PC-9 (cell line): ENCODE measurements at regions of chr7 and their contacts with region 1.

Region 1: GRCh38 chr7:27921081-27921836 is 181.3 kb downstream of the TAX1BP1 start:
- DNase-seq: peak; percentile 66 to 82
- H3K4me3 ChIP-seq: no peak overlapping the region
- H3K27ac ChIP-seq: 0 out of 2 replicates have a peak overlapping the region, but pooled peaks have one; percentile 1
- H3K4me1 ChIP-seq: peaks cover 33% of the 10 kb centered on the region
- H3K27me3 ChIP-seq: no peaks in the 10 kb centered on the region
- CTCF ChIP-seq: peak; percentile 91

Region 2: GRCh38 chr7:27196287-27196767 is 724.9 kb before region 1 on chr7:
- CTCF ChIA-PET with region 1: interaction called, 21 read pairs
- POLR2A ChIA-PET with region 1: no interaction called
- intact Hi-C with region 1: loop called (anchors 1 kb)
- DNase-seq: peak; percentile 59 to 76
- H3K4me3 ChIP-seq: no peak overlapping the region
- H3K27ac ChIP-seq: no peak overlapping the region
- H3K4me1 ChIP-seq: no peaks in the 10 kb centered on the region
- H3K27me3 ChIP-seq: peaks cover 13% of the 10 kb centered on the region; the same call in 1 of the 2 replicates
- CTCF ChIP-seq: peak; percentile 99

Region 3: DNA sequence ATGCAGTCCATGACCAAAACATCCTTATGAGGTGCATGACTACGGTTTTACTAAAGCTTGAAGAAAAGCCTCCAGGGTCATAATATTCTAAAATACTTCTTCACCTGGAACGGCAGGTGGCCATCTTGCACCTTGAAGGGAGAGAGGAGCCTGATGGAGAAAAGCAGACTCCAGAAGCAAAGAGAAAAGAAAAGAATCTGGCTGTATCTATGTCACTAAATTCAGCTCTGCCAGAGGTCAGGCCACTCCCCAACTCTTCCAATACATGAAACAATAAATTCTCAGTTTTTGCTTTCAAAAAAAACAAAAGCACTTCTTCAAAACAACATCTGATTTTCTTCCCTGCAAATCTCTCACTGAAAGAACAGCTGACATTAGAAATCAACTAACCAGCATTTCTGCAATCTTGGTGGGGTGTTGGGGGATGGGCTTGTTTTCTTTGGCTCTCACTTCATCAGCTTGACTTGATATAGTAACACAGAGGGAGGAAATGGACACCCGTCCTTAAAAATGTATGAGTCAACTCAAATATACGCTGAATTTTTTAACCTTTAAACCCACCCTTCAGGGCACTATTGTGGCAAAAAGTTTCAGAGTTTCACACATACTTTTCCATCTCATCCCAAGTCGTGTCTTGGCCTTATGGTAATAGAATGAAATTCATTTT is 280.2 kb before region 1 on chr7:
- CTCF ChIA-PET with region 1: interaction called, 3 read pairs
- POLR2A ChIA-PET with region 1: no interaction called
- intact Hi-C with region 1: loop called (anchors 1 kb)
- DNase-seq: peak; percentile 87 to 96
- H3K4me3 ChIP-seq: peak overlapping the region; percentile 8; the same call in 1 of the 2 replicates
- H3K27ac ChIP-seq: peak overlapping the region; percentile 90
- H3K4me1 ChIP-seq: peaks cover 37% of the 10 kb centered on the region
- H3K27me3 ChIP-seq: no peaks in the 10 kb centered on the region
- CTCF ChIP-seq: peak; percentile 40; the same call in 1 of the 2 replicates

Region 4: GRCh38 chr7:27739909-27740448 is 181.3 kb before region 1 on chr7 and contains the start of gene TAX1BP1:
- CTCF ChIA-PET with region 1: interaction called, 6 read pairs
- POLR2A ChIA-PET with region 1: interaction called, 18 read pairs
- intact Hi-C with region 1: loop called (anchors 1 kb)
- DNase-seq: peak; percentile 91 to 96
- H3K4me3 ChIP-seq: peak within 1 kb of the TSS; percentile 84
- H3K27ac ChIP-seq: peak within 1 kb of the TSS; percentile 84
- H3K4me1 ChIP-seq: peaks cover 70% of the 10 kb centered on the region
- H3K27me3 ChIP-seq: no peaks in the 10 kb centered on the region
- CTCF ChIP-seq: no peak
- total RNA-seq, gene TAX1BP1: 143 and 174 TPM in 2 replicates

Region 5: DNA sequence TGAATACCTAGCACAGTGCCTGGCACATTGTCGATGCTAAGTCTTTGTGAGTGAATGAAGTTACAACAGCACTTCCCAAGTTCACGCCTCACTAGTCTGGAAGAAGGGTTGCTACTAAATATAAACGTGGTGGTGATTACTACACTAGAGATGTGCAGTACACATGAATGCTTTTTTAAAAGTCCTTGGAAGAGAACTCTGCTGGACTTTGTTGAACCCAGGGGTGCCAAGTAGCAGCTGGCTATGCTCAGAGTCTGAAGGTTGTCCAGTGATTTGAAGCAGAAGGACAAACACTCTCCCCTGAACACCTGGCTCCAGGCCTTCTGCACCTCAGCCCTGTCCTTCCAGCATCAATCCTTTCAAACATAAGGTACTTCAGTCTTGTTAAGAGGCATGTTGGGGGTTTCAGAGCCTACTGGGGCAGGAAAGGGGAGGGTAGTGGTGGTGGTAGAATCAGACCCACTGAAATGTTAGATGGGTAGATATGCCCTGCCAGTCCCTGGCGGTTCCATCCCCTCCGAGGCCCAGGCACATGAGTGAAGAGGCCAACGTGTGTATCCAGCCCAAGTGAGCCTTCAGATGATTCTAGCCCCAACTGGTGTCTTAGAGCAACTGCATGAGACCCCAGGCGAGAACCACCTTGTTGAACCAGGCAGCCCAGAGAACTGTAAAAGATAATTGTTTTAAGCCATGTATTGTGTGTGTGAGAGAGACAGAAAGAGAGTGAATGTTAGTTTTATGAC is 86.9 kb before region 1 on chr7:
- CTCF ChIA-PET with region 1: no interaction called
- POLR2A ChIA-PET with region 1: no interaction called
- intact Hi-C with region 1: loop called (anchors 5 kb)
- DNase-seq: no peak
- H3K4me3 ChIP-seq: no peak overlapping the region
- H3K27ac ChIP-seq: no peak overlapping the region
- H3K4me1 ChIP-seq: no peaks in the 10 kb centered on the region
- H3K27me3 ChIP-seq: no peaks in the 10 kb centered on the region
- CTCF ChIP-seq: no peak

Region 6: DNA sequence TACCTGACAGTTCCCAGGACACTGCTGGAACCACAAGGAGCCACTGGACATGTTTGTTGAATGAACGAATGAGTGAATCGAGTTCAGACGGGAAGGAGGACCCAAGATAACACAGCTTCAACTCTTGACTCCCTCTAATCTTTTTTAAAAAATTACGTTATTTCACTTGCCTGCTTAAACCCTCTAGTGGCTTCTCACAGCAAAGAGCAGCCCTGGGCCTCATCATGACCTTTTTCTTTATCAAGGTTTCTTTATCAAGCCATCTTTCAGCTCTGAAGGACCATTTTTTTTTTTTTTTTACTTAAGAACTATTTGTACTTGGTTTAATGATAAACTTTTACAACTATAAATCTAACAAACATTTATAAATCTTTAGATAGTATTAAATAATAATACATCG is 70.7 kb before region 1 on chr7:
- CTCF ChIA-PET with region 1: no interaction called
- POLR2A ChIA-PET with region 1: no interaction called
- intact Hi-C with region 1: no loop called
- DNase-seq: no peak
- H3K4me3 ChIP-seq: no peak overlapping the region
- H3K27ac ChIP-seq: no peak overlapping the region
- H3K4me1 ChIP-seq: no peaks in the 10 kb centered on the region
- H3K27me3 ChIP-seq: no peaks in the 10 kb centered on the region
- CTCF ChIP-seq: no peak

Region 7: GRCh38 chr7:28078036-28078901 is 157.0 kb after region 1 on chr7:
- CTCF ChIA-PET with region 1: no interaction called
- POLR2A ChIA-PET with region 1: no interaction called
- intact Hi-C with region 1: loop called (anchors 1 kb)
- DNase-seq: peak in 1 of 2 experiments; percentile 47
- H3K4me3 ChIP-seq: no peak overlapping the region
- H3K27ac ChIP-seq: no peak overlapping the region
- H3K4me1 ChIP-seq: peaks cover 16% of the 10 kb centered on the region
- H3K27me3 ChIP-seq: no peaks in the 10 kb centered on the region
- CTCF ChIP-seq: peak; percentile 99

Region 8: DNA sequence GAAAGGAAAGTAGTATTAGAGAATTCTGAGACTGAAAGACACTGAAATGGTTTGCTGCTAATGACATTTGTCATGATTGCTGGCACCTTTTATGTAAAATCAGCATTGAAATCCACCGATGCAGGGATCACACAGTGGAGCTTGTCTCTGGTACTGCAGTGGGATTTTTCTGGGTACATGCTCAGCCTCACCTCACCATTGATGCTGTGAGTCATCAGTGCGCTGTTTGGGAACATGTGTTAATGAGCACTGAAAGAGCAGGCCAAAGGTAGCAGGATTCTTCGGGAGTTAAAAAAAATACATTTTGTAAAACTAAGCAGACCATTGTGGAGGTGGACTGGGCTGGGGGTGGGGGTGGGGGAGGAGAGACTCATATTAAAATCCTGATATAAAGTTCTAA is 666.0 kb after region 1 on chr7:
- CTCF ChIA-PET with region 1: no interaction called
- POLR2A ChIA-PET with region 1: no interaction called
- intact Hi-C with region 1: no loop called
- DNase-seq: peak in 1 of 2 experiments; percentile 70
- H3K4me3 ChIP-seq: no peak overlapping the region
- H3K27ac ChIP-seq: peak overlapping the region; percentile 50
- H3K4me1 ChIP-seq: peaks cover 24% of the 10 kb centered on the region
- H3K27me3 ChIP-seq: 0 out of 2 replicates have a peak, but pooled peaks cover 3% of the 10 kb centered on the region
- CTCF ChIP-seq: no peak